Breast epithelium (tissue), 4 donors: ENCODE measurements at regions of chr7 and their contacts with region 1.

Region 1: DNA sequence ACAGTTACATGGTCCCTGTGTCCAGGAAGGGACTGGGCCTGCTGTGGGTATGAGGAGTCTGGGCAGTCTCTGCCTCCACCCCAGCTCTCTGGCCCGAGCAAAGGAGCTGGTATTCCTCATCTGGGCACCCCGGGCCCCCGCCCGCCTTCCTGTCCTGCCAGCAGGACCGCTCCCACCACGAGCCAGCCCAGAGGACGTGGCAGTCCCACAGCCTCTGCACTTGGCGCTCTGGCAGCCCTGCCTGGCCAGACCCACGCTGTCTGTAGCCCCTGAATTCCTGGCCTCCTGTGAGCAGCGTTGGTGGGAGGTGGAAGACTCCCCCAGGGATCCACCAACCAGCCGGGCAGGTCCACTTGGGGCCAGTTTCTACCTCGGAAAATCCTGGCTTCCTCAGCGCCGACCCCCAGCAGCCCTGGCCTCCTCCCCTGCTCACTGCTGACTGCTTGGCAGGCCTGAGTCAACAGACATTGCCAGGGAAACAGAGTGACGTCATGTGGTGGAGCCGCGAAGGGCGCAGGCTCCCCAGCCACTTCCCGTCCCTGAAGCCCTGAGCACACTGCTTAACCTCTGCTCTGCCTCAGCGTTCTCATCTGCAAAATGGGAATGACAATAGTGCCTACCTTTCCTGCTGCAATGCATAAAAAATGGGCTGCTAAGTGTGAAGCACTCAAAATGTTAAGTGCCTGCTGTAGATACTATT is 21.6 kb upstream of the LIMK1 start:
- DNase-seq: peak; percentile 81 to 84
- H3K4me3 ChIP-seq: peak overlapping the region in 2 of 3 donors; percentile 7 to 51
- H3K27ac ChIP-seq: peak overlapping the region; percentile 93 to 95
- H3K4me1 ChIP-seq: peaks cover 0 to 7% of the 10 kb centered on the region in 2 donors
- H3K27me3 ChIP-seq: no peaks in the 10 kb centered on the region
- CTCF ChIP-seq: no peak
- POLR2A ChIP-seq: peak; percentile 41

Region 2: DNA sequence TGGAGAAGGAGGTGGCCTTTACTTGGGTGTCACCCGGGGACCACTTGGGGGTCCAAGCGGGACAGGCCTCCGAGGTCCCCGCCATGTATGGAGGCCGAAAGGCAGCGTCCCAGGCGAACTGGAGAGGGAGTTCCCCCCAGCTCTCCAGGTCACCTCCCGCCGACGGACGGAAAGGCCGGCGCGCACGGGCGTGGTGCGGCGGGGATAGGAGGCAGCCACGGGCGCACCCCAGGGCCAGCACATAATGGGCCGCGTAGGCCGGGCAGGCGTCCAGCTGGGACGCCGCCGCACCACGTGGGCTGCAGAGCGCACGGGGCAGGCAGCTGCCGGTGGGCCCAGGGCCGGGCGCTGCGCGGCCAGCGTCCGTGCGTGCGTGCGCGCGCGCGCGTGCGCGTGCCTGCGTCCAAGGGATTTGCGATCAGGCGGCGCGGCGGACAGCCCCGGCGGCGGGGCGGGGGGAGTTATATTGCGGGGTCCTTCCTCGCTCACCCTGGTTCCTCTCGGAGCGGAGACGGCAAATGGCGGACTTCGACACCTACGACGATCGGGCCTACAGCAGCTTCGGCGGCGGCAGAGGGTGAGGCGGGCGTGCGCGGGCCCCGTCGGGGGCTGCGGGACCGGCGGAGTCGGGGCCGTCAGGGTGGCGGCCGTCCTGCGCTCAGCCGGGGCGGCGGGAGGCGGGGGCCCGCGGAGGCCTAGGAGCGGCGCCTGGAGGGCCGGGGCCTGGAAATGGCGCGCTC is 112.0 kb after region 1 on chr7 and contains the start of gene EIF4H:
- intact Hi-C with region 1: loop called (anchors 10 kb)
- DNase-seq: peak; percentile 93 to 96
- H3K4me3 ChIP-seq: peak within 1 kb of the TSS; percentile 94 to 98 (median 97)
- H3K27ac ChIP-seq: peak within 1 kb of the TSS; percentile 99 to 100
- H3K4me1 ChIP-seq: peaks cover 0 to 6% of the 10 kb centered on the region in 2 donors
- H3K27me3 ChIP-seq: no peaks in the 10 kb centered on the region
- CTCF ChIP-seq: no peak
- POLR2A ChIP-seq: no peak
- total RNA-seq, gene EIF4H: 199 to 256 (median 238) TPM

Region 3: GRCh38 chr7:74193054-74193453 is 131.1 kb after region 1 on chr7:
- intact Hi-C with region 1: loop called (anchors 5 kb)
- DNase-seq: no peak
- H3K4me3 ChIP-seq: no peak overlapping the region
- H3K27ac ChIP-seq: no peak overlapping the region
- H3K4me1 ChIP-seq: no peaks in the 10 kb centered on the region
- H3K27me3 ChIP-seq: no peaks in the 10 kb centered on the region
- CTCF ChIP-seq: no peak
- POLR2A ChIP-seq: no peak

Region 4: GRCh38 chr7:74206589-74207120 is 144.7 kb after region 1 on chr7:
- intact Hi-C with region 1: no loop called
- DNase-seq: peak; percentile 66 to 91
- H3K4me3 ChIP-seq: peak overlapping the region; percentile 20 to 62 (median 39)
- H3K27ac ChIP-seq: no peak overlapping the region
- H3K4me1 ChIP-seq: no peaks in the 10 kb centered on the region
- H3K27me3 ChIP-seq: no peaks in the 10 kb centered on the region
- CTCF ChIP-seq: peak; percentile 85 to 96 (median 95)
- POLR2A ChIP-seq: no peak